ENCODE measurements at regions of chr6 and their contacts with region 1.

Region 1: GRCh38 chr6:18893540-18894269 is 506.6 kb downstream of the RNF144B start:
- DNase-seq: no peak
- H3K4me3 ChIP-seq: no peak overlapping the region
- H3K27ac ChIP-seq: no peak overlapping the region
- H3K4me1 ChIP-seq: no peaks in the 10 kb centered on the region
- H3K27me3 ChIP-seq: no peaks in the 10 kb centered on the region
- CTCF ChIP-seq: no peak

Region 2: DNA sequence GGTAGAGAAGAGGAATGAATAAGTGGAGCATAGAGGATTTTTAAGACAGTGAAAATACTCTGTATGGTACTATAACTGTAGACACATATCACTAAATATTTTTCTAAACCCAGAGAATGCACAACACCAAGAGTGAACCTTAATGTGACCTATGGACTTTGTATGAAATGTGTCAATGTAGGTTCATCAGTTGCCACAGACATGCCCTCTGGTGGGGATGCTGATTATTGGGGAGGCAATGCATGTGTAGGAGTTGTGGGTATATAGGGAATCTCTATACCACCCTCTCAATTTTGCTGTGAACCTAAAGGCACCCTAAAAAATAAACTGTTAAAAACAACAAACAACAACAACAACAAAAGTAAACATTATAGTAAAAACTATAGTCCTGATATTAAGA is 212.9 kb before region 1 on chr6:
- CTCF ChIA-PET with region 1: no interaction called
- POLR2A ChIA-PET with region 1: no interaction called
- intact Hi-C with region 1: no loop called
- DNase-seq: no peak
- H3K4me3 ChIP-seq: no peak overlapping the region
- H3K27ac ChIP-seq: no peak overlapping the region
- H3K4me1 ChIP-seq: no peaks in the 10 kb centered on the region
- H3K27me3 ChIP-seq: no peaks in the 10 kb centered on the region
- CTCF ChIP-seq: peak; percentile 32; the same call in 1 of the 2 replicates

Region 3: GRCh38 chr6:19180344-19181072 is 286.8 kb after region 1 on chr6:
- CTCF ChIA-PET with region 1: no interaction called
- POLR2A ChIA-PET with region 1: interaction called, 11 read pairs
- intact Hi-C with region 1: no loop called
- DNase-seq: no peak
- H3K4me3 ChIP-seq: no peak overlapping the region
- H3K27ac ChIP-seq: no peak overlapping the region
- H3K4me1 ChIP-seq: no peaks in the 10 kb centered on the region
- H3K27me3 ChIP-seq: no peaks in the 10 kb centered on the region
- CTCF ChIP-seq: no peak

Measured in A673 (cell line).